ENCODE measurements at regions of chr6 and their contacts with region 1.

Region 1: DNA sequence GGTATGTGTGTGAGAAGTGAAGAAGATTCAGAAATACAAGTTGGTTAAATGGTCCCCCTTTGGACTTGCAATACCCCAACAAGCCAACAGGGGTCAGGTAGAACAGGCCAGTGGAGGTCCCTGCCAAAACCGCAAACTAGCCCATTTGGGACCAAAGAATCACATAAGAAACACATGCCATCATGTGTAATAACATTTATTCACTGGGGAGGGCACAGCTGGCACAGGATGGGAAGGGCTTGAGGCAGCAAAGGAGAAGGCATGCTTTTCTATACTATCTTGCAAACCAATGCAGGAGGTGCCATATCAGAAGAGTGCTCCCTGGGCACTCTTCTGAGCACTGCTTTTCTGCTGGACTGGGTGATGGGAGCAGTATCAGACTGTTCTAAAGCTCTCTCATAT is 116.1 kb upstream of the TRAF3IP2 start:
- DNase-seq: no peak
- ATAC-seq: peak; percentile 28
- H3K4me3 ChIP-seq: no peak overlapping the region
- H3K27ac ChIP-seq: no peak overlapping the region
- H3K4me1 ChIP-seq: peaks cover 40% of the 10 kb centered on the region
- H3K27me3 ChIP-seq: no peaks in the 10 kb centered on the region
- CTCF ChIP-seq: peak; percentile 50 to 68 (median 67)
- EP300 ChIP-seq: no peak
- POLR2A ChIP-seq: no peak
- RAD21 ChIP-seq: peak; percentile 75

Region 2: DNA sequence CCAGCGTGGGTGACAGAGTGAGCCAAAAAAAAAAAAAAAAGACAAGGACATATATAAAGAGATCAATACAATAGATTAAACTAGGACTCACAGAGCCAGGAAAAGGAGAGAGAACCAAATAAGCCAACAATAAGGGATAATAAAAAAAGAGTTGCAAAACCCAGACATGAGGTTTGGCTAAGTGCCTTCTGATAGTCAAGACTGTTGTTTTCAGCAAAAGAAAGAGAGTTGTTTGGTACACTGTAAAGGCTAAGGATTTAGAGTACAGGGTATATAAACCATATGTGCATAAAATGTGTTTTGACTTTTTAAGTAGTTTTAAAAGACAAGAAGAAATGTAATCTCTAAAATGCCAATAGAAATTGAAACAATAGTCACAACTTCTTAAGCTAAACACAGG is 697.1 kb before region 1 on chr6:
- CTCF ChIA-PET with region 1: no interaction called
- POLR2A ChIA-PET with region 1: no interaction called
- RAD21 ChIA-PET with region 1: no interaction called
- SMC1A ChIA-PET with region 1: no interaction called
- in situ Hi-C with region 1: no loop called
- intact Hi-C with region 1: no loop called
- DNase-seq: no peak
- ATAC-seq: no peak
- H3K4me3 ChIP-seq: no peak overlapping the region
- H3K27ac ChIP-seq: no peak overlapping the region
- H3K4me1 ChIP-seq: no peaks in the 10 kb centered on the region
- H3K27me3 ChIP-seq: no peaks in the 10 kb centered on the region
- CTCF ChIP-seq: no peak
- EP300 ChIP-seq: no peak
- POLR2A ChIP-seq: no peak
- RAD21 ChIP-seq: no peak

Region 3: DNA sequence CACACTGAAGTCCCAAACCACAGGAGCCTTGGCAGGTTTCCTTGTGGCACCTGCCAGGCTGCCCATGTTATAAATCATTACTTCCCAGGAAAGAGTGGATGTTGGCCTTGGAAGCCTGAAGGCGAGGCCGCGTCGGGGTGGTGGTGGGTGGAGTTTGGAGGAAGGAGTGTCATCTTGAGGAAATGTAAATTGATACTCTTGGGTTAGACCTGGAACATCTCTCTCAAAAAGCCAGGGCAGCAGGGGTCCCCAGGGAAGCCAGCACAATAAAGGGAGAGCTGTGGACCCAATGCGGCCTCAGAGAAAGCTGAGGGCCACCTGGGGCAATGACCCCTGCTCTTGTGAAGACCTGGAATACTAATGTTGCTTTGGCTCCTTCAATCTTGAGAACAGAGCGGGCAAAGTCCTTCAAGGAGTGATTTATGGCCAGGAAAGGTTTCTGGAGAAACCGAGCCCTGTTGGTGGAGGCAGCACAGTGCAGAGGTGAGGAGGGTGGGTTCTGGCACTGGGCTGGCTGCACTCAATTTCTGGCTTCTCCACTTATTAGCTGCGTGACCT is 89.8 kb before region 1 on chr6:
- CTCF ChIA-PET with region 1: no interaction called
- POLR2A ChIA-PET with region 1: no interaction called
- RAD21 ChIA-PET with region 1: no interaction called
- SMC1A ChIA-PET with region 1: no interaction called
- in situ Hi-C with region 1: no loop called
- intact Hi-C with region 1: no loop called
- DNase-seq: no peak
- ATAC-seq: no peak
- H3K4me3 ChIP-seq: no peak overlapping the region
- H3K27ac ChIP-seq: no peak overlapping the region
- H3K4me1 ChIP-seq: no peaks in the 10 kb centered on the region
- H3K27me3 ChIP-seq: 0 out of 4 replicates have a peak, but pooled peaks cover 0 to 4% of the 10 kb centered on the region in 2 experiments
- CTCF ChIP-seq: no peak
- EP300 ChIP-seq: no peak
- POLR2A ChIP-seq: no peak
- RAD21 ChIP-seq: no peak

Region 4: GRCh38 chr6:111743862-111744692 is 22.3 kb after region 1 on chr6:
- CTCF ChIA-PET with region 1: interaction called, 16 read pairs
- POLR2A ChIA-PET with region 1: interaction called, 19 read pairs
- RAD21 ChIA-PET with region 1: interaction called, 16 read pairs
- SMC1A ChIA-PET with region 1: interaction called, 181 read pairs
- in situ Hi-C with region 1: no loop called
- intact Hi-C with region 1: loop called (anchors 1 kb)
- DNase-seq: no peak
- ATAC-seq: no peak
- H3K4me3 ChIP-seq: no peak overlapping the region
- H3K27ac ChIP-seq: no peak overlapping the region
- H3K4me1 ChIP-seq: peaks cover 58% of the 10 kb centered on the region
- H3K27me3 ChIP-seq: no peaks in the 10 kb centered on the region
- CTCF ChIP-seq: no peak
- EP300 ChIP-seq: no peak
- POLR2A ChIP-seq: no peak
- RAD21 ChIP-seq: no peak

Region 5: GRCh38 chr6:111769365-111770152 is 47.8 kb after region 1 on chr6:
- CTCF ChIA-PET with region 1: interaction called, 13 read pairs
- POLR2A ChIA-PET with region 1: interaction called, 8 read pairs
- RAD21 ChIA-PET with region 1: interaction called, 75 read pairs
- SMC1A ChIA-PET with region 1: interaction called, 86 read pairs
- in situ Hi-C with region 1: no loop called
- intact Hi-C with region 1: loop called (anchors 1 kb)
- DNase-seq: no peak
- ATAC-seq: no peak
- H3K4me3 ChIP-seq: no peak overlapping the region
- H3K27ac ChIP-seq: peak overlapping the region; percentile 93
- H3K4me1 ChIP-seq: peaks cover 57% of the 10 kb centered on the region
- H3K27me3 ChIP-seq: no peaks in the 10 kb centered on the region
- CTCF ChIP-seq: no peak
- EP300 ChIP-seq: no peak
- POLR2A ChIP-seq: no peak
- RAD21 ChIP-seq: no peak

Region 6: GRCh38 chr6:111823831-111824607 is 102.3 kb after region 1 on chr6:
- CTCF ChIA-PET with region 1: interaction called, 10 read pairs
- POLR2A ChIA-PET with region 1: no interaction called
- RAD21 ChIA-PET with region 1: interaction called, 5 read pairs
- SMC1A ChIA-PET with region 1: interaction called, 5 read pairs
- in situ Hi-C with region 1: no loop called
- intact Hi-C with region 1: no loop called
- DNase-seq: no peak
- ATAC-seq: peak; percentile 73
- H3K4me3 ChIP-seq: peak overlapping the region; percentile 45
- H3K27ac ChIP-seq: peak overlapping the region; percentile 57
- H3K4me1 ChIP-seq: peaks cover 32% of the 10 kb centered on the region
- H3K27me3 ChIP-seq: no peaks in the 10 kb centered on the region
- CTCF ChIP-seq: no peak
- EP300 ChIP-seq: no peak
- POLR2A ChIP-seq: no peak
- RAD21 ChIP-seq: no peak

Region 7: DNA sequence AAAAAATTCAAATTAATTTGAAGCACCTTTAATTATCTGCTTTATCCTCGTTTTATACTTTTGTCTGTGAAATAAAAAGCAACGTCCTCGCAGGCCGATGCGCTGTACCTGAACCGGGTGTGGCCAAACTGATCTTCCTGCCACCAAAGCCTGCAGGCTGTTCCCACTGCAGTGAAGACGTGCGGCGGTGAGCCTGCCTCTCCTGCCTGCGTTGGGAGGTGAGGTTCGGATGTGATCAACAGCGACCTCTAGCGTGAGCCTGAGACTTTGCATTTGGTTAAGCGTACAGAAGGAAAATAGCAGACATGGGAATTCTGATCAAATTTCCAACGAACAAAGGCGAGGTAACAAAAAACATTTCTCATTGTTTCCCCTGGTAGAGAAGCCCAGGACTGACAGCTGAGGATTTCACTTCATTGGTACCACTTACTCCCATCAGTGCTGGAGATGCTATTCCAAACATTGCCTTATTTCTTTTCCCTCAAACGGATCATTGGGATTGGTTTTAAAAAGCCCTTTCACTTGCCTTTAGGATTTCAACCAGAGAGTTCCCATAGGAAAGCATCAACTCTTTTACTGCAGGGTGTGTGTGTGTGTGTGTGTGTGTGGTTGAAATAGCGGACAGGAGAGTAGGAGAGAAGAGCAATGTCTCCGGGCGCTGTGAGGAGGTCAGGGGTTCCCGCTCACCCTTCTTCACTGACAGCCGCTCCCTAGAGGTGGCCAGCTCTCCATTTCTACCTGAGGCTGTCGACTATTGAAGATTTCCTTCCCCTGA is 275.5 kb after region 1 on chr6:
- CTCF ChIA-PET with region 1: interaction called, 15 read pairs
- POLR2A ChIA-PET with region 1: interaction called, 3 read pairs
- RAD21 ChIA-PET with region 1: interaction called, 3 read pairs
- SMC1A ChIA-PET with region 1: interaction called, 16 read pairs
- in situ Hi-C with region 1: no loop called
- intact Hi-C with region 1: no loop called
- DNase-seq: no peak
- ATAC-seq: peak; percentile 85
- H3K4me3 ChIP-seq: no peak overlapping the region
- H3K27ac ChIP-seq: no peak overlapping the region
- H3K4me1 ChIP-seq: peaks cover 28% of the 10 kb centered on the region
- H3K27me3 ChIP-seq: no peaks in the 10 kb centered on the region
- CTCF ChIP-seq: peak; percentile 85 to 95 (median 93); a peak in 5 of 6 replicates
- EP300 ChIP-seq: no peak
- POLR2A ChIP-seq: no peak
- RAD21 ChIP-seq: peak; percentile 99